CD4-positive, alpha-beta memory T cell (primary cell): ENCODE measurements at regions of chr2 and their contacts with region 1.

Region 1: DNA sequence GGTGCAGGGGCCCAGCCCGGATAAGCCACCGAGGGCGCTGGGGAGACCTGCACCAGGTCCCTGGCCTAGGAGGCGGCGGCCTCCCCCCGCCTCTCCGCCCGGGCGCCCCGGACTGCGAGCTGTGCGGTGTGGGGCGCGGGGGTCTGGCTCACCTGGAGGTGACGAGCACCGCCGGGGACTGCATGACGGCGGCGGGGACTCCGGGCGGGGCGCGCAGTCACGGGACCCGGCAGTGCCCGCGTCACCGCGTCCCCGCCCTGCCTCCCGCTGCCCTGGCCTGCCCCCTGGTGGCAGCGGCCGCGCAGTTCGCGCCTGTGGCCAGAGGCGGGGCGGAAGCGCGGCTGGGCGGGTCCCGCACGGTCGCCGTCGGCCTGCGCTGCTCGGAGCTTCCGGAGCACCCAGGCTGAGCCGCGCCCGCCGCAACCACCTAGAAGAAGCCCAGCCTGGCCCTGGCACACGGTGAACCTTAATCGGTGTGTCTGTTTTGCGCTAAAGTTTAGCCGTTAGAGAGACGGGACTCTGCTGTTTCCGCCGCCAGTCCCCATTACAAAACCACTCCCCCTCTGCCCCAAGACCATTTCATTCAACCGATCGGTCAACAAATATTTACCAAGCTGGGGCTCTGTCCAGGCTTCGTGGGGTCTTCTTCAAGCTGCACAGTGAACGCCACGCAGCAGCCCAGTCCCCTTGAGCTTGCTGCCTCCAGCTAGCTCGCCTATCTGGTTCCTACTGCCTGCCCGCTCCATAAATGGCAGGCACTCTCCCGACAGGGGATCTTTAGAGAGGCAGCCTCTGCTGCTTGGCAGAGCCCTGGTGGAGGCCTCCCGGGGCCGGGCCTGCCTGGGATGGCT is at the start of gene HS1BP3:
- DNase-seq: peak; percentile 88 to 98 (median 94)
- H3K4me3 ChIP-seq: peak within 1 kb of the TSS; percentile 50 to 87
- H3K4me3 Mint-ChIP-seq: peak within 1 kb of the TSS; percentile 87 to 93 (median 90)
- H3K27ac ChIP-seq: peak within 1 kb of the TSS; percentile 89
- H3K27ac Mint-ChIP-seq: peak within 1 kb of the TSS; percentile 92 to 98 (median 97)
- H3K4me1 ChIP-seq: peaks cover 20% of the 10 kb centered on the region
- H3K4me1 Mint-ChIP-seq: peaks cover 22 to 42% (median 36%) of the 10 kb centered on the region in 4 donors
- H3K27me3 ChIP-seq: no peaks in the 10 kb centered on the region
- H3K27me3 Mint-ChIP-seq: no peaks in the 10 kb centered on the region
- total RNA-seq, gene HS1BP3: 20.1 TPM

Region 2: GRCh38 chr2:19893520-19894133 is 757.5 kb before region 1 on chr2:
- CTCF ChIA-PET with region 1: no interaction called
- POLR2A ChIA-PET with region 1: no interaction called
- intact Hi-C with region 1: no loop called
- DNase-seq: no peak
- H3K4me3 ChIP-seq: no peak overlapping the region
- H3K4me3 Mint-ChIP-seq: no peak overlapping the region
- H3K27ac ChIP-seq: no peak overlapping the region
- H3K27ac Mint-ChIP-seq: no peak overlapping the region
- H3K4me1 ChIP-seq: peaks cover 43% of the 10 kb centered on the region
- H3K4me1 Mint-ChIP-seq: peaks cover 25 to 42% (median 32%) of the 10 kb centered on the region in 4 donors
- H3K27me3 ChIP-seq: no peaks in the 10 kb centered on the region
- H3K27me3 Mint-ChIP-seq: no peaks in the 10 kb centered on the region

Region 3: DNA sequence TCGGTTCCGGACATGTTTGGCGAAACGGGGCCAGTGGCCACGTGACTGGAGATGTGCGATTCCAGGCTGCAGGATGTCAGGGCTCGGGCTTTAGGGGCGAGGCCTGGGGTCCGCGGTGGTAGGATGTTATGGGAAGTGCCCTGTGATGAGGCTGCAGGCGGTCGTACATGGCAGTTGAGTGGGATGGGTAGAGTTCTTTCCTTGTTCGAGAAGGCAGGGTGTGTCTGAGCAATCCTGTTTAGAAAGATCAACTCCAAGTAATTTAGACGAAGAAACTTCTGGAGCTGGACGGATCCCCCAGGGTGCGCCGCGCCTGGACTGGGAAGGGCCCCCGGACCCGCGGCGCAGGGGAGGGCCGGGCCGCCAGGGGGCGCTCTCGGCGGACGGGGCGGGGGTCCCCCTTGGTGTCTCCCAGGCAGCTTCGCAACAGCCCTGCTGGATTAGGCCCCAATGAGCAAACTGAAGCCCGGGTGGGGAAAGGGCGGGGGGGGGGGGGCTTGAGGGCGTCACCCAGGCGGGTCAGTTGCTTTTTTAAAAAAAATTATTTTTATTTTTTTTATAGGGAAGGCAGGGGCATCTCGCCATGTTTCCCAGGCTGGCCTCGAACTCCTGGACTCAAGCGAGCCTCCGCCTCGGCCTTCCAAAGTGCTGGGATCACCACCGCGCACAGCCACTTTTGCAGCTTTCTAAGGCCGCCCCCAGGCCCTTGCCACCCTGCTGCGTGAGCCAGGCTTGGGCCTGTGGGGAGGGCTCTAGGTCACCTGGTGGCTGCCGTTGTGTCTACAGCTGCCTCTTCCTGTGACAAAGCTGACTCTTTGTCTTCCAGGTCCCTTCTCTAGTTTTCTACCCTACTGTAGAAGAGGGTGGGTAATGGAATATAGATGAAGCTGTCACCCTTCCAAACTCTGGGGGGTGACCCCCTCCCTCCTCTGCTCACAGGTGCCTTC is 408.8 kb before region 1 on chr2:
- CTCF ChIA-PET with region 1: no interaction called
- POLR2A ChIA-PET with region 1: no interaction called
- intact Hi-C with region 1: loop called (anchors 10 kb)
- DNase-seq: peak in 1 of 5 donors; percentile 16
- H3K4me3 ChIP-seq: no peak overlapping the region
- H3K4me3 Mint-ChIP-seq: peak overlapping the region in 7 of 8 donors; percentile 8 to 71 (median 41)
- H3K27ac ChIP-seq: no peak overlapping the region
- H3K27ac Mint-ChIP-seq: peak overlapping the region in 2 of 7 donors; percentile 5 to 39
- H3K4me1 ChIP-seq: peaks cover 4% of the 10 kb centered on the region
- H3K4me1 Mint-ChIP-seq: peaks cover 4 to 10% (median 7%) of the 10 kb centered on the region in 4 donors
- H3K27me3 ChIP-seq: no peaks in the 10 kb centered on the region
- H3K27me3 Mint-ChIP-seq: peaks cover 5 to 8% of the 10 kb centered on the region in 2 donors

Region 4: GRCh38 chr2:20446917-20447436 is 204.1 kb before region 1 on chr2 and contains the start of gene RHOB:
- CTCF ChIA-PET with region 1: interaction called, 19 read pairs
- POLR2A ChIA-PET with region 1: interaction called, 70 read pairs
- intact Hi-C with region 1: loop called (anchors 1 kb)
- DNase-seq: peak; percentile 79 to 88 (median 82)
- H3K4me3 ChIP-seq: peak within 1 kb of the TSS; percentile 47 to 76
- H3K4me3 Mint-ChIP-seq: peak within 1 kb of the TSS; percentile 78 to 86 (median 82)
- H3K27ac ChIP-seq: peak within 1 kb of the TSS; percentile 47
- H3K27ac Mint-ChIP-seq: peak within 1 kb of the TSS in 5 of 7 donors; percentile 61 to 90 (median 75)
- H3K4me1 ChIP-seq: peaks cover 11% of the 10 kb centered on the region
- H3K4me1 Mint-ChIP-seq: peaks cover 0 to 9% (median 3%) of the 10 kb centered on the region in 4 donors
- H3K27me3 ChIP-seq: peaks cover 10% of the 10 kb centered on the region
- H3K27me3 Mint-ChIP-seq: peaks cover 8 to 13% of the 10 kb centered on the region in 2 donors
- total RNA-seq, gene RHOB: 7.9 to 8.9 TPM

Region 5: GRCh38 chr2:20635675-20636584 is 15.2 kb before region 1 on chr2:
- CTCF ChIA-PET with region 1: interaction called, 10 read pairs
- POLR2A ChIA-PET with region 1: interaction called, 5 read pairs
- intact Hi-C with region 1: no loop called
- DNase-seq: peak in 4 of 5 donors; percentile 8 to 20 (median 18)
- H3K4me3 ChIP-seq: no peak overlapping the region
- H3K4me3 Mint-ChIP-seq: no peak overlapping the region
- H3K27ac ChIP-seq: no peak overlapping the region
- H3K27ac Mint-ChIP-seq: peak overlapping the region in 1 of 7 donors; percentile 17
- H3K4me1 ChIP-seq: no peaks in the 10 kb centered on the region
- H3K4me1 Mint-ChIP-seq: no peaks in the 10 kb centered on the region
- H3K27me3 ChIP-seq: no peaks in the 10 kb centered on the region
- H3K27me3 Mint-ChIP-seq: no peaks in the 10 kb centered on the region